ENCODE measurements at regions of chr6 and their contacts with region 1.

Region 1: DNA sequence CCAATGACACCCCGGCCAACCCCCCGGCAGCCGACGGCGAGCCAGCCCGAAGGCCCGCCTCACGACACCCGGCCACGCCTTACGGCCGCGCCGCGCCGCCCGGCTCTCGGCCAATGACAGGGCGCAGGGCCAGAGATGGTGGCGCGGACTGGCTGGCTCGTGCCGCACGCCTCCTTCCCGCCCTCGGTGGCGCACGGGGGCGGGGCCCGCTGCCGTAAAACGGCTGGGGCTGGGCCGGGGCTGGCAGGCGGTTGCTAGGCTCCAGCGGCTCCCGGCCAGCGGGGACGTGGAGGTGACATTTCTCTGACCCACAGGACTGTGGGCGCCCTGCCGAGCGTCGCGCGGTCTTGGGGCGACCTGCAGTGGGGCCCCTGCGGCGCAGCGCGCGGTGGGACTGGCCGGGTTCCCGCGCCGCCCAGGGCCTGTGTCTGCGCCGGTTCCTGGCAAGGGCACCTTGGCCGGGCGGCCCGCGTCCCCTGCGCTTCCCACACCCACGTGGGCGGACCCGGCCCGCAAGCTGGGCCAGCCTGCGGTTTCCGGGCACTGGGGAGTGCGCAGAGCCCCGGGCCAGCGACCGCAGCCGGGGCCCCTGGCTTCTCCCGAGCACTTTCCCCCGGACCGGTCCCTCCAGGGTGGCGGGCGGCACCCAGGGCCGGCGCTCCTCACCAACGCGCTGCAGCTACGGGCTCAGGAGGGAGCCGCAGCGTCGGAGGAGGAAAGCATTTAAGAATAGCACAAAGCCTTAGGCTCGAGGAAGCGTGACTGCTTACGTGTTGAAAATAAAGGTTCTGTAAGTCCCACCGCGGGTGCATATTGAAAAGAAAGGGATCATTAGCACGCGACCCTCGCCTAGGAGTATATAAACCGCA is at the start of gene MPC1:
- DNase-seq: peak; percentile 97
- H3K4me3 ChIP-seq: peak within 1 kb of the TSS; percentile 81 to 96 (median 82)
- H3K27ac ChIP-seq: peak within 1 kb of the TSS; percentile 91 to 94 (median 92)
- H3K4me1 ChIP-seq: peaks cover 14 to 36% (median 24%) of the 10 kb centered on the region in 4 donors
- H3K27me3 ChIP-seq: no peaks in the 10 kb centered on the region
- CTCF ChIP-seq: no peak
- EP300 ChIP-seq: no peak
- POLR2A ChIP-seq: peak; percentile 43
- total RNA-seq, gene MPC1: 54.7 to 68.1 (median 63.1) TPM

Region 2: GRCh38 chr6:166333172-166333995 is 49.8 kb before region 1 on chr6:
- intact Hi-C with region 1: loop called (anchors 5 kb)
- DNase-seq: no peak
- H3K4me3 ChIP-seq: no peak overlapping the region
- H3K27ac ChIP-seq: no peak overlapping the region
- H3K4me1 ChIP-seq: peaks cover 10 to 63% (median 52%) of the 10 kb centered on the region in 4 donors
- H3K27me3 ChIP-seq: no peaks in the 10 kb centered on the region
- CTCF ChIP-seq: no peak
- EP300 ChIP-seq: no peak
- POLR2A ChIP-seq: no peak

Region 3: DNA sequence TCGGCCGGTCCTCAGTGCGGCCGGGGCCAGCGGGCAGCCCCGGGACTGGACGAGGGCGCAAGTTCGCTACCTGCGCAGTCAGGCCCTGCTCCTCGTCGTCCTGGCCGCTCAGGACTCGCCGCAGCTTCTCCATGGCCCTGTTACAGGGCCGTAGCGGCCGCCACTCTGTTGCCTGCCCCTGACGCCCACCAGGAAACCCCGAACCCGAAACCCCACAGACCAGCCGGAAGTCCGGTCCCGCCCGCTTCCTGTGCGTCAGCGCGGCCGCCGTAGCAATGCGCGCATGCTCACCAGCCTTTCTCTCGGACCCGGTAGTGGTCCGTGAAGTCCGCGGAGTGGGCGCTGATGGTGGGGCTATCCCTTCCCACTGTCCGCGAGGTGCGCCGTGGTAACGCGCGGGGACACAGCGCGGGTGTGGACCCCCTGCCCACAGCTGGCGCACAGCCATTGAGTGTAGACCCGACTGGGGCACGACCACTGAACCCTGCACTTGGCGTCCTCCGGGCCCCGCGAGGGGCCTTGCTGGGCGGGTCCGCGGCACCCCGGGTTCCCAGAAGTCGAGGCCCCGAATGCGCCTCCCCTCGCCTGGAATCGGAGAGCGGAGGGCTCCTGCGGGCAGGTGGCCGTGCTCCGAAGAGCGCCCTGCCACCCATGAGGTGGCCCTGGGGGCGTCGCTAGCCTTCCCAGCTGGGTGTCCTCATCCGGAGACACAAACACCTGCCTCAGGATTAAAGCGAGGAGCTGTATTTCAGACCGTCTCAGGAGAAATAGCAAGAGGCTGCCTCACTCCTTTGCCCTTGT is 40.6 kb before region 1 on chr6 and contains the start of gene SFT2D1:
- intact Hi-C with region 1: loop called (anchors 2 kb)
- DNase-seq: peak; percentile 97
- H3K4me3 ChIP-seq: peak within 1 kb of the TSS; percentile 72 to 99 (median 88)
- H3K27ac ChIP-seq: peak within 1 kb of the TSS; percentile 82 to 92 (median 88)
- H3K4me1 ChIP-seq: peaks cover 27 to 48% (median 44%) of the 10 kb centered on the region in 4 donors
- H3K27me3 ChIP-seq: no peaks in the 10 kb centered on the region
- CTCF ChIP-seq: peak in 1 of 3 experiments; percentile 21
- EP300 ChIP-seq: no peak
- POLR2A ChIP-seq: peak; percentile 85
- total RNA-seq, gene SFT2D1: 19.8 to 34.9 (median 27.9) TPM